Endothelial cell of umbilical vein (primary cell): ENCODE measurements at regions of chr3 and their contacts with region 1.

Region 1: DNA sequence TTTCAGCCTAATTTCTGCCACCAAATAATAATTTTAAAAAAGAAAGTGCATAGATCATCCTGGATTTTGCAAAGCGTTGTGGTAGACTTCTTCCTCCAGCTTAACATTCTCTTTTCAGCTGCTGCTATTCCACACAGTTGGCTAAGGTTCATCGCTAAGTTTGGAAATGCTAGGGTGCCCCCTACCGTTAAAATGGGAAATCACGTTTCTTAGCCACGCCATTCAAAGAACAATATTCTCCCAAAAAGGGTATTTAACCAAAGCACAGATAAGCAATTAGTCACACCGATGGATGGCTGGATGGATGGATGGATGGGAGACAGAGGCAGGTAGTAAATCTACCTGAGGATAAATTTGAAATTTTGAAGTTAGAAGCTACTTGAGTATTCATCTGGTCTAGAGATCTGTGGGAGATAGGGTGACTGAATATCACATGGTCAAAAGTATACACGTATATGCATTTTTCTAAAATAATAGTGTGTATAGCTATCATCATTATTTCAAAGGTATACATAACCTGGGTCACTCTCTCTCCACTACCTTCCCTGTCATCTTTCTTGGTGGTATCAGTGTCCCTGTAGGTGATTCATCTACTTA is 67.2 kb downstream of the EFHB start:
- DNase-seq: peak; percentile 63
- H3K4me3 ChIP-seq: no peak overlapping the region
- H3K27ac ChIP-seq: no peak overlapping the region
- H3K4me1 ChIP-seq: no peaks in the 10 kb centered on the region
- H3K27me3 ChIP-seq: peaks cover 0 to 3% of the 10 kb centered on the region in 2 experiments
- CTCF ChIP-seq: peak; percentile 65 to 70
- POLR2A ChIP-seq: no peak

Region 2: GRCh38 chr3:18389108-18389733 is 1477.6 kb before region 1 on chr3:
- CTCF ChIA-PET with region 1: no interaction called
- POLR2A ChIA-PET with region 1: no interaction called
- dilution Hi-C with region 1: no loop called
- intact Hi-C with region 1: loop called (anchors 5 kb)
- DNase-seq: peak; percentile 33
- H3K4me3 ChIP-seq: no peak overlapping the region
- H3K27ac ChIP-seq: no peak overlapping the region
- H3K4me1 ChIP-seq: no peaks in the 10 kb centered on the region
- H3K27me3 ChIP-seq: no peaks in the 10 kb centered on the region
- CTCF ChIP-seq: peak; percentile 33 to 45
- POLR2A ChIP-seq: no peak

Region 3: DNA sequence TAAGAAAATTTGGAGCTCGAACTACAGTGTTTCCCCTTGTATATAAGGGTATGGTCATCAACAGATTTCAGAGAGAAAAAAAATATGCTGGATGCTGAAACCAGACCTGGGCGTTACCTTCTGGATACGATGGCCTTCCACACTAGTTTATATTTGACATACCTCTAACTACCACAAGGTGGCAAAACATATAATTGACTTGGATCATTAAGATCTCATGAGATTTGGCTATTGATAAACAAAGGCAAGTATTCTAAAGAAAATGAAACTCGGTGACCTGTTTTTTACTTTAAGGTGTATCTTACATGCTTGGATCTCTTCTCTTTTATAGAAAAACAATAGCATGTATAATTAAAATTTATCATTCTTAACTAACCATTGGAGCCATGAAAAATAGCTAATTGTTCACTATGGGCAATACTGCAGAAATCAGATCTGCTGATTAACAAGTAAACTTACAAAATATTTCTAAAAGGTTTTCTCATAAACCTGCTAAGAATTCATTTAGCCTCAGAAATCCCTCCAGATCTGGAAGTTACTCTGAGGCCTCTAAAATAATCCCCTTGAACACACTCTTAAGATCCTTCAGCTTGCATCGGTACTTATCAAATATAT is 1019.2 kb before region 1 on chr3:
- CTCF ChIA-PET with region 1: no interaction called
- POLR2A ChIA-PET with region 1: no interaction called
- dilution Hi-C with region 1: no loop called
- intact Hi-C with region 1: loop called (anchors 5 kb)
- DNase-seq: no peak
- H3K4me3 ChIP-seq: no peak overlapping the region
- H3K27ac ChIP-seq: no peak overlapping the region
- H3K4me1 ChIP-seq: no peaks in the 10 kb centered on the region
- H3K27me3 ChIP-seq: no peaks in the 10 kb centered on the region
- CTCF ChIP-seq: no peak
- POLR2A ChIP-seq: no peak

Region 4: GRCh38 chr3:19348929-19349564 is 517.8 kb before region 1 on chr3:
- CTCF ChIA-PET with region 1: interaction called, 23 read pairs
- POLR2A ChIA-PET with region 1: no interaction called
- dilution Hi-C with region 1: no loop called
- intact Hi-C with region 1: loop called (anchors 1 kb)
- DNase-seq: no peak
- H3K4me3 ChIP-seq: no peak overlapping the region
- H3K27ac ChIP-seq: no peak overlapping the region
- H3K4me1 ChIP-seq: no peaks in the 10 kb centered on the region
- H3K27me3 ChIP-seq: no peaks in the 10 kb centered on the region
- CTCF ChIP-seq: peak; percentile 30 to 33
- POLR2A ChIP-seq: no peak

Region 5: GRCh38 chr3:19877656-19878055 is 10.8 kb after region 1 on chr3:
- CTCF ChIA-PET with region 1: interaction called, 17 read pairs
- POLR2A ChIA-PET with region 1: no interaction called
- dilution Hi-C with region 1: no loop called
- intact Hi-C with region 1: no loop called
- DNase-seq: no peak
- H3K4me3 ChIP-seq: no peak overlapping the region
- H3K27ac ChIP-seq: no peak overlapping the region
- H3K4me1 ChIP-seq: no peaks in the 10 kb centered on the region
- H3K27me3 ChIP-seq: no peaks in the 10 kb centered on the region
- CTCF ChIP-seq: no peak
- POLR2A ChIP-seq: no peak